Activated T-helper 2 cell treated with anti-CD3 and anti-CD28 coated beads, Interferon-gamma antibody, Interleukin-2, Interleukin-4, amounts not matched to agents 10 μg/mL and 5 μg/mL and 100 μg/mL, durations not matched to agents 14 hours and 24 hours and 36 hours (primary cell): ENCODE measurements at regions of chr7 and their contacts with region 1.

Region 1: DNA sequence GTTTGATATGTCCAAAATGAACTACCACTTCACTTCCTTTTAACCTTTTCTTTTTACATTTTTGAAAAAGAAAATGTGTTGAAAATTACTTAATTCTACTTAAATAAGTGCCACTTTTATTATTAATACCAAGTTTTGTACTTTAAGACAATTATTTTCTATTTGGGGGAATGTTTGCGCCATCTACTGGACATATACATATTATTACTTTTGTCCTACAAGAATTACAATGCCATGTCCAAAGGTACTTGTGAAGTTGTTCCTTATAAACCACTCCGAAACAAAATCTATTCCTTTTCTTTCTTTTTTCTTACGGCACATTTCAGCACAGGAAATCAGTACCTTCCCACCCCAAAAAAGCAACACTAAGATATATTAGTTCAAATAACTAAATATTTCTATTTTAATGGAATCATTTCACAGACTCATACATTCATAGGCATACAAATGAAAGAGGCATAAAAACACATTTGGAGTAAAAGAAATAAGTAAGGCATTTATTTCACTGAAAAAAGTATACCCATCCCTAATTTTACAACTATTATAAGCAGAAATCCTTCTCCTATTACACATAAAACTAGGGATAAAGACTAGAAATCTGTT is 169.9 kb downstream of the RNF133 start:
- DNase-seq: no peak
- H3K4me3 Mint-ChIP-seq: no peak overlapping the region
- H3K27ac Mint-ChIP-seq: no peak overlapping the region
- H3K4me1 Mint-ChIP-seq: no peaks in the 10 kb centered on the region
- H3K27me3 Mint-ChIP-seq: no peaks in the 10 kb centered on the region

Region 2: DNA sequence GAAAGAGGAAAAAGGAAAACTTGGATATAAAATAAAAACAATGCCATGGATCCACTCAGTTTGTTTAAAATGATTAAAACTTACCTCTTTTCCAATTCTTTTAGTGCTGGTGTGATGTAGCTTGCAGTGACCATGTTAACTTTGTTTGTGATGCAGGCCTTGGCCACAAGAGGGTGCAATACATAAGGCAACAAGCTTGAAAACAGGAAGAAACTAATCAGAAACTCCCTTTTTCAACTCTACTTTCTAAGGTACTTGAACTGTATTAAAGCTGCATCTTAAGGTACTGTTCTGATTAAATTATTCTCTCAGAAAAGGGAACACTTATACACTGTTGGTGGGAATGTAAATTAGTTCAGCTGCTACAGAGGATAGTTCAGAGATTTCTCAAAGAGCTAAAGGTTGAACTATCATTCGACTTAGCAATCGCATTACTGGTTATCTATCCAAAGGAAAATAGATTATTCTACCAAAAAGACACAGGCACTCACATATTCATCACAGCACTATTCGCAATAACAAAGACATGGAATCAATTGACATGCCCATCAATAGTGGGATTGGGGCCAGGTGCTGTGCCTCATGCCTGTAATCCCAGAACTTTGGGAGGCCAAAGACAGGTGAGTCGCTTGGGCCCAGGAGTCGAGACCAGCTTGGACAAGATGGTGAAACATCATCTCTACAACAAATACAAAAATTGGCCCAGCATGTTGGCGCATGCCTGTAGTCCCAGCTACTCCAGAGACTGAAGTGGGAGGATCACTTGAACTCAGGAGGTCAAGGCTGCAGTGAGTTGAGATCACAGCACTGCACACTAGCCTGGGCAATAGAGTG is 435.8 kb before region 1 on chr7:
- intact Hi-C with region 1: loop called (anchors 5 kb)
- DNase-seq: peak; percentile 21
- H3K4me3 Mint-ChIP-seq: no peak overlapping the region
- H3K27ac Mint-ChIP-seq: no peak overlapping the region
- H3K4me1 Mint-ChIP-seq: no peaks in the 10 kb centered on the region
- H3K27me3 Mint-ChIP-seq: no peaks in the 10 kb centered on the region

Region 3: GRCh38 chr7:122219253-122219865 is 309.6 kb before region 1 on chr7:
- intact Hi-C with region 1: loop called (anchors 2 kb)
- DNase-seq: no peak
- H3K4me3 Mint-ChIP-seq: no peak overlapping the region
- H3K27ac Mint-ChIP-seq: no peak overlapping the region
- H3K4me1 Mint-ChIP-seq: no peaks in the 10 kb centered on the region
- H3K27me3 Mint-ChIP-seq: no peaks in the 10 kb centered on the region

Region 4: GRCh38 chr7:122515404-122515803 is 13.6 kb before region 1 on chr7:
- intact Hi-C with region 1: no loop called
- DNase-seq: no peak
- H3K4me3 Mint-ChIP-seq: no peak overlapping the region
- H3K27ac Mint-ChIP-seq: no peak overlapping the region
- H3K4me1 Mint-ChIP-seq: no peaks in the 10 kb centered on the region
- H3K27me3 Mint-ChIP-seq: no peaks in the 10 kb centered on the region

Region 5: DNA sequence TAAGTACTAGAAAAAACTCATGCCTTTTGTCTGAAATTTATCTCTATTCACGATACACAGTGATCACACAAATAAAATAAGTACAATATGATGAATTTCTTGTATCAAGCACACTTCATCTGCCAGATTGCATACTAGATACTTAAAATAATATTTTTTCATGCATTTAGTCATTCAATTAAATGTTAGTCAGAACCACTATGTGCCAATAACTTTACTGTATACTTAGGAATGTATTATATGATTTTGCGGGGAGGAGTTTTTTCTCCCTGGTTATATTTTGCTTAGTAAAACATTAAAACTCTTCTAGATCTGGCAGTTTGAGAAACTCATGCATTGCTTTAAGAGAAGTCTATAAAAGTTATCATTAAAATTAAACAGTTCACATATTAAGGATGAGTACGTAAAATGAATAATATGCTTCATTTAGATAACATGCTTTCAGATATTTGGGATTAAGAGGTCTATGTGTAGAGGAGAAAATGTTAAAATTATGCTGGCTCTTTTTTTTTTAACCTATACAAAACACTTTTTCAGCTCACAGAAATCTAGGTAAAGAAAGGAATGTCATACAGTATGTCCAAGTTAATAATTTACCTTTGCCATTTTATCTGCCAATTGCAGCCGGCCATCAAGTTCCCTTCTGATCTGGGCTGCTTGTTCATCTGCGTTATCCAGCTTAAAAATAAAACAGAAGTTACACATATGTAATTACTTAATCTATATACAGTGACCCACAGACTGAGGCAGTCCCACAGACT is 99.9 kb after region 1 on chr7:
- intact Hi-C with region 1: no loop called
- DNase-seq: no peak
- H3K4me3 Mint-ChIP-seq: no peak overlapping the region
- H3K27ac Mint-ChIP-seq: no peak overlapping the region
- H3K4me1 Mint-ChIP-seq: no peaks in the 10 kb centered on the region
- H3K27me3 Mint-ChIP-seq: no peaks in the 10 kb centered on the region